ENCODE measurements at regions of chr6 and their contacts with region 1.

Region 1: DNA sequence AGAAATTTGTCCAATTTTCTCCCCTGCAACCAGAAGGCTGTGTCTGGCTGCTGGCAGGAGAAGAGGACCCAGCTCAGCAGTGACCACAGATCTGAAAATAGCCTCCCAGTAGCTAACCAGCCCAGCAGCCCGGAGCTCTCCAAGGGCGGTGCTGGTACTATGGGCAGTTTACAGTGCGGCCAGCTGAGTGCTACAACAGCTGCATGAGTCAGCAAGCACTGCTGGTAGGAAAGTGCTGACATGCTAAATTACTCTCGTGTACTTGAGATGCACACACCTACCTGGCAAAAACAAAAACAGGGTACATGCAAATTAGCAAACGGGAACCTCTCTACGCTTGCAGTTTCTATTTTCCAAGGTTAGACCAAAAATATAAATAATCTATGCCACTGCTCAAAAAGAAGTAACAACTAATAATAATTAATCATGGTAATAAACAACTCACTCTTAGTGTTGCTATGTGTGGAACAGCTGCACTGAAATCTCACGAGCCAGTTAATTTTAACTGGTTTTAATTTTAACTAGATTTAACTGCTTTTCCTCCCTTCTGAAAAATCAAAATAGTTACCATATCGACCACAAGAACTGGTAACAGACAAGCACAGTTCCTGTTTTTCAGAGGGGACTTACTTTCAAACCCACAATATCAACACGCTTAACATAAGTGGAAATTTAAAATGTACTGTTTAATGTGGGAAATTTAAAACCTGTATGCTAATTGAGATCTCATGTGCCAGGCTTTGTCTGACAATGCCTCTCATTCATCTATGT is 10.8 kb downstream of the BACH2 start:
- DNase-seq: peak; percentile 53 to 72
- ATAC-seq: peak; percentile 59 to 78 (median 71)
- H3K4me3 ChIP-seq: peak overlapping the region; percentile 20
- H3K4me3 Mint-ChIP-seq: peak overlapping the region; percentile 93
- H3K27ac ChIP-seq: peak overlapping the region; percentile 66
- H3K27ac Mint-ChIP-seq: peak overlapping the region; percentile 84 to 93
- H3K4me1 ChIP-seq: peaks cover 24% of the 10 kb centered on the region
- H3K4me1 Mint-ChIP-seq: peaks cover 30 to 33% of the 10 kb centered on the region in 2 donors
- H3K27me3 ChIP-seq: no peaks in the 10 kb centered on the region
- H3K27me3 Mint-ChIP-seq: peaks cover 3 to 27% of the 10 kb centered on the region in 2 donors
- CTCF ChIP-seq: no peak

Region 2: DNA sequence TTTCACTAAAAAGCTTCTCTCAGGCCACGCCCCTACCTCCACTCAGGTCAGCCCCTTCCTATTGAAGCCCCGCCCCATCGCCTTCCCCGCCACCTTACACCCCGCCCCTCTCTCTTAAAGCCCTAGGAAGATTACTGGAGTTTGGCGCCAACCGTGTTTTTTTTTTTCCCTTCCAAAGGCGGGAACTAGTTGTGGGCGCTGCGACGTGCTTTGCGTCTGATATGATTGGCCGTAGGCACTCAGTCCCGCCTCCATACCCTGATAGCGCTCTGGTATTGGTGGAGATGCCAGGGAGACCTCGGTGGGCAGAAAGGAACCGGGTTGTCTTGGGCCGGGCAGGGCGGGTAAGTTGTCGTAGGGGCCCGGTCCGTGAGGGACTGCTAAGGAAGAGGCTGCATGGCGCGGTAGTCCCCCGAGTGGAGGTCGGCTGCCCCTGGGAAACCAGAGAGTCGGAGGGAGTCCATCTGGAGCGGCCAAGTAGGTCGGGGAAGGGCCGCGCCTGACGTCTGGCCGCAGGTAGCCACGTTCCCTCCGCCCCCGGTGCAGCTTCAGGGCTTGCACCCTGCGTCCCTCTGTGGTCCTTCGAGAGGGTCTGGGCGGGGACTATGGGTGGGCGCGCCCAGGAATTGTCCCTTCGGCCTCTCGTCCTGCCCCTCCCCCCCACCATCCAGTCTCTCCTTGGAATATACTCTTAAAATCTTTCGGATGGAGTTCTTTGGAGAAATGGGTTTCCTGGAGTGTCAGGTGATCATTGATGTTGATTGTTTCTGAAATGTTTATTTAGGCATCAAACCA is 456.0 kb before region 1 on chr6 and contains the start of gene CASP8AP2:
- intact Hi-C with region 1: loop called (anchors 10 kb)
- DNase-seq: peak; percentile 81 to 99
- ATAC-seq: peak; percentile 92 to 98 (median 92)
- H3K4me3 ChIP-seq: peak within 1 kb of the TSS; percentile 96
- H3K4me3 Mint-ChIP-seq: peak within 1 kb of the TSS; percentile 98
- H3K27ac ChIP-seq: peak within 1 kb of the TSS; percentile 71
- H3K27ac Mint-ChIP-seq: peak within 1 kb of the TSS; percentile 89 to 95
- H3K4me1 ChIP-seq: peaks cover 23% of the 10 kb centered on the region
- H3K4me1 Mint-ChIP-seq: peaks cover 19 to 30% of the 10 kb centered on the region in 2 donors
- H3K27me3 ChIP-seq: no peaks in the 10 kb centered on the region
- H3K27me3 Mint-ChIP-seq: no peaks in the 10 kb centered on the region
- CTCF ChIP-seq: no peak
- total RNA-seq, gene CASP8AP2: 24.3 to 31.8 (median 25.4) TPM

Region 3: DNA sequence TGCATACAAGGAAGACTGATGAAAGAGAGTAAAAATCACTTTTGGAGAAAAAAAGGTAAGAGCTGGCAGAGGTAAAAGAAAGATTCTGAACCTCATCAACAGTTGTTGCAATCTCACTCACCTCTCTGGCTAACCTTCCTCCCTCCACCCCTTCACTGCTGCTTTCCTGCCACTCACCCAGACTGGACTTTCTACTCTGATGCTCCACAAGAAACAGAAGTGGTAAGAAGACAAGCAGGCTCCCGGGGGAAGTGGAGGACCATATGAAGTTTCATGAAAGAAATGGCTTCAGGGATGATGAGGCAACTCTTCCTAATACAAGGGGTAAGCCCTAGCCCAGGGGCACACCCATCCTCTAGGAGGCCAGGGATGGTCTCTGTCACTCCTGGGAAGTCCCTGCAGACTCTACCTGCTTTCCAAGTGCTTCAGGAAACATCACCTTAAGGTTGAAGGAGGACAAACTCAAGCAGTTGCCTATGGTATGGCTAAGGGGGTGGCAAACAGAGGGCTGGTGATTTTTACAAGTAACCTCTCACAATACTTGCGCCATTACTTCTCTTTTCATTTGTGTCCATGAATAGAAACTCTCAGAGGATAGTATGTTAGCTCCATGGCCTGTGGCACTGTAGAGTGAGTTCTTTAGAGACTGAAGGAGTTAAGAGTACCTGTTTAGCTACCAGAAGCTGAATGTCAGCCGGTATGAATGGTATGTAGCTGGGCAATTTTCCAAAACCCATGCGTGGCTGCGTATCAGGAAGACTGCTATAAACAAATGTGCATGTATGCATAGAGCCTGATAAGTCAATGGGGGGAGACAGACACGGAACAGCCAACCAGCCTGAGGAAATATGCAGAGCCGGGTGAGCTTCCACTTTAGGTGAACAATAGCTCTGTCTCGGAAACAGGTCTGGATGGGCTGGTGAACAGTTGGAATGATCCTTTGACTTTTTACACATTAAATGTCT is 101.2 kb before region 1 on chr6:
- intact Hi-C with region 1: loop called (anchors 5 kb)
- DNase-seq: peak in 1 of 2 donors; percentile 56
- ATAC-seq: no peak
- H3K4me3 ChIP-seq: no peak overlapping the region
- H3K4me3 Mint-ChIP-seq: no peak overlapping the region
- H3K27ac ChIP-seq: no peak overlapping the region
- H3K27ac Mint-ChIP-seq: no peak overlapping the region
- H3K4me1 ChIP-seq: peaks cover 16% of the 10 kb centered on the region
- H3K4me1 Mint-ChIP-seq: peaks cover 19 to 22% of the 10 kb centered on the region in 2 donors
- H3K27me3 ChIP-seq: no peaks in the 10 kb centered on the region
- H3K27me3 Mint-ChIP-seq: no peaks in the 10 kb centered on the region
- CTCF ChIP-seq: no peak

Region 4: GRCh38 chr6:90197854-90198496 is 87.8 kb before region 1 on chr6:
- intact Hi-C with region 1: no loop called
- DNase-seq: peak in 1 of 2 donors; percentile 40
- ATAC-seq: no peak
- H3K4me3 ChIP-seq: no peak overlapping the region
- H3K4me3 Mint-ChIP-seq: no peak overlapping the region
- H3K27ac ChIP-seq: no peak overlapping the region
- H3K27ac Mint-ChIP-seq: no peak overlapping the region
- H3K4me1 ChIP-seq: peaks cover 4% of the 10 kb centered on the region
- H3K4me1 Mint-ChIP-seq: peaks cover 11 to 12% of the 10 kb centered on the region in 2 donors
- H3K27me3 ChIP-seq: no peaks in the 10 kb centered on the region
- H3K27me3 Mint-ChIP-seq: no peaks in the 10 kb centered on the region
- CTCF ChIP-seq: no peak

Region 5: DNA sequence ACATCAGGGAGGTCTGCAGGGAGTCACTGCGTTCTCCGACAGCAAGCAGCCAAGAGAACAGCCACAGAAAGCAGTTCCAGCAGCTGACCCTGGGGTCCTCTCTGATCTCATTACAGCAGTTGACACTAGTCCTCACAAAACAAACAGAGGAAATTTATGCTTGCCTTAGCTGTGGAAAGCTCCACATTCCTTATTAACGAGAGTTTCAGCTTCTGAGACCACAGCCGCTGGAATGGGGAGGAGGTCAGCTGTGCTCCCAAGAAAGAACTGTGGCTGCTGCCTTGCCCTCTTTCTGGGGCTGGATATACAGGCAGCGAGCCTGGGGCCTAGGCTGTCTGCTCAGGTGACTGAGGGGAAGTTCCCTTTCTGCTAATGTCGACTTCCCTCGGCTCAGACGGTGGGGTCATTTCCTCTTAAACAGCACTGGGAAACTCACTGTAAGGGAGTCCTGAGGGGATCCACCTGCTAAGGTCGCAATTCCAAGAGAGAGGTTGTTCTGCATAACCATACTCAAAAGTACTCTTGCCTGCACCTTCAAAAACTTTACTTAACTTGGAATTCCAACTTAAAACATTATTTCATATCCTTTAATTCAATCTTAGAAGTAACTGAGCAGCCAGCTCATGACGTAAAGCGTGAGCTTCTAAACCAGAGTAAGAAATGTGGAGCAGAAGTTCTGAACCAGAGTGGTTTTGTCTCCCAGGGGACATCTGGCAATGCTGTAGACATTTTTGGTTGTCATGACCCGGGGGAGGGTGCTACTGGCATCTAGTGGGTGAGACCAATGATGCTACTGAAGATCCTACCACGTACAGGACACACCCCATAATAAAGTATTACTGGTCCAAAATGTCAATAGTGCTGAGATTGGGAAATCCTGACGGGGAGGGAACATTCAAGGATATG is 69.5 kb before region 1 on chr6:
- intact Hi-C with region 1: loop called (anchors 2 kb)
- DNase-seq: peak in 1 of 2 donors; percentile 81
- ATAC-seq: peak in 1 of 3 donors; percentile 20
- H3K4me3 ChIP-seq: no peak overlapping the region
- H3K4me3 Mint-ChIP-seq: no peak overlapping the region
- H3K27ac ChIP-seq: peak overlapping the region; percentile 82
- H3K27ac Mint-ChIP-seq: peak overlapping the region in 1 of 2 donors; percentile 63
- H3K4me1 ChIP-seq: peaks cover 36% of the 10 kb centered on the region
- H3K4me1 Mint-ChIP-seq: peaks cover 0 to 9% of the 10 kb centered on the region in 2 donors
- H3K27me3 ChIP-seq: no peaks in the 10 kb centered on the region
- H3K27me3 Mint-ChIP-seq: no peaks in the 10 kb centered on the region
- CTCF ChIP-seq: no peak

Region 6: GRCh38 chr6:90274451-90275030 is 11.3 kb before region 1 on chr6:
- intact Hi-C with region 1: loop called (anchors 1 kb)
- DNase-seq: peak; percentile 76 to 97
- ATAC-seq: peak; percentile 86 to 96 (median 94)
- H3K4me3 ChIP-seq: no peak overlapping the region
- H3K4me3 Mint-ChIP-seq: peak overlapping the region; percentile 68
- H3K27ac ChIP-seq: peak overlapping the region; percentile 92
- H3K27ac Mint-ChIP-seq: peak overlapping the region; percentile 77 to 87
- H3K4me1 ChIP-seq: peaks cover 32% of the 10 kb centered on the region
- H3K4me1 Mint-ChIP-seq: peaks cover 17 to 30% of the 10 kb centered on the region in 2 donors
- H3K27me3 ChIP-seq: no peaks in the 10 kb centered on the region
- H3K27me3 Mint-ChIP-seq: peaks cover 0 to 12% of the 10 kb centered on the region in 2 donors
- CTCF ChIP-seq: no peak

Region 7: DNA sequence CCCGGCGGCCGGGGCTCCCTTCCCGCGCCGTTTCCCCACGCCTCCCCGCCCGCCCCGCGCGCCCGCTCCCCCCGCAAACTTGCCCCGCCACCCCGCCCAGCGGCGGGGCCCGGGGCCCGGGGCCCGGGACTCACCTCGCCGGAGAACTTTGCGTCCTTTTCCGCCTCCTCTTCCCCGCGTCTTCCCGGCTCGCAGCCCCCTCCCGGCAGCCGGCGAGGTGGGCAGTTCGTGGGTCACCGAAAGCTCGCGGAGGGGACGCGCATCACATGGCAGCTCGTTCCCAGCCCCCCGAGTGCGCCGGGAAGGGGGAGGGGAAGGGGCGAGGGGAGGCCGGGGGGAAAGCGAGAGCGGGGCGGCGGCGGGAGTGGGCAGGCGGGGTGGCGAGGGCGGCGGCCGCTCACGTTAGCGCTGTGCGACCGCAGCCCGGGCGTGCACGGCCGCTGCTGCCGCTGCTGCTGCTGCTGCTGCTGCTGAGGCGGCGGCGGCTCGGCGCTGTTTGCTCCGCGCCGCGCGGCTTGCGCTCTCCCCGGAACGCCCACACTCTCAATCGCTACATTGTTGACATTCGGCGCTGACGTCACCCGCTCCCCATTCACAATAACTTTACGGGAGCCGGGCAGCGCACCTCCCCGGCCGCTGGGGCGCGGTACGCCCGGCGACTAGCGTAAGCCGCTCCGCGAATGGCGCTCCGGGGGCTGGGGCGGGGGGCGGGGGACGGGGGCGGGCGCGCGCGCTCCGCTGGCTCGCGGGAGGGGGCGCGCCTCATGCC is 10.7 kb after region 1 on chr6 and contains the start of gene BACH2:
- intact Hi-C with region 1: loop called (anchors 1 kb)
- DNase-seq: peak; percentile 84 to 97
- ATAC-seq: peak; percentile 68 to 81 (median 72)
- H3K4me3 ChIP-seq: peak within 1 kb of the TSS; percentile 67
- H3K4me3 Mint-ChIP-seq: peak within 1 kb of the TSS; percentile 94
- H3K27ac ChIP-seq: peak within 1 kb of the TSS; percentile 79
- H3K27ac Mint-ChIP-seq: peak within 1 kb of the TSS; percentile 83 to 86
- H3K4me1 ChIP-seq: peaks cover 19% of the 10 kb centered on the region
- H3K4me1 Mint-ChIP-seq: peaks cover 11 to 21% of the 10 kb centered on the region in 2 donors
- H3K27me3 ChIP-seq: peaks cover 3% of the 10 kb centered on the region
- H3K27me3 Mint-ChIP-seq: peaks cover 13 to 30% of the 10 kb centered on the region in 2 donors
- CTCF ChIP-seq: no peak
- total RNA-seq, gene BACH2: 32.1 to 37.8 (median 32.7) TPM

Region 8: GRCh38 chr6:90328004-90328403 is 42.2 kb after region 1 on chr6:
- intact Hi-C with region 1: no loop called
- DNase-seq: no peak
- ATAC-seq: no peak
- H3K4me3 ChIP-seq: no peak overlapping the region
- H3K4me3 Mint-ChIP-seq: no peak overlapping the region
- H3K27ac ChIP-seq: no peak overlapping the region
- H3K27ac Mint-ChIP-seq: no peak overlapping the region
- H3K4me1 ChIP-seq: no peaks in the 10 kb centered on the region
- H3K4me1 Mint-ChIP-seq: no peaks in the 10 kb centered on the region
- H3K27me3 ChIP-seq: no peaks in the 10 kb centered on the region
- H3K27me3 Mint-ChIP-seq: no peaks in the 10 kb centered on the region
- CTCF ChIP-seq: no peak

Region 9: GRCh38 chr6:90478789-90479602 is 193.2 kb after region 1 on chr6:
- intact Hi-C with region 1: loop called (anchors 2 kb)
- DNase-seq: peak; percentile 68 to 92
- ATAC-seq: peak; percentile 92 to 97 (median 97)
- H3K4me3 ChIP-seq: no peak overlapping the region
- H3K4me3 Mint-ChIP-seq: no peak overlapping the region
- H3K27ac ChIP-seq: no peak overlapping the region
- H3K27ac Mint-ChIP-seq: peak overlapping the region in 1 of 2 donors; percentile 87
- H3K4me1 ChIP-seq: peaks cover 13% of the 10 kb centered on the region
- H3K4me1 Mint-ChIP-seq: peaks cover 11 to 12% of the 10 kb centered on the region in 2 donors
- H3K27me3 ChIP-seq: no peaks in the 10 kb centered on the region
- H3K27me3 Mint-ChIP-seq: no peaks in the 10 kb centered on the region
- CTCF ChIP-seq: peak; percentile 93